ENCODE measurements at regions of chr1 and their contacts with region 1.

Region 1: DNA sequence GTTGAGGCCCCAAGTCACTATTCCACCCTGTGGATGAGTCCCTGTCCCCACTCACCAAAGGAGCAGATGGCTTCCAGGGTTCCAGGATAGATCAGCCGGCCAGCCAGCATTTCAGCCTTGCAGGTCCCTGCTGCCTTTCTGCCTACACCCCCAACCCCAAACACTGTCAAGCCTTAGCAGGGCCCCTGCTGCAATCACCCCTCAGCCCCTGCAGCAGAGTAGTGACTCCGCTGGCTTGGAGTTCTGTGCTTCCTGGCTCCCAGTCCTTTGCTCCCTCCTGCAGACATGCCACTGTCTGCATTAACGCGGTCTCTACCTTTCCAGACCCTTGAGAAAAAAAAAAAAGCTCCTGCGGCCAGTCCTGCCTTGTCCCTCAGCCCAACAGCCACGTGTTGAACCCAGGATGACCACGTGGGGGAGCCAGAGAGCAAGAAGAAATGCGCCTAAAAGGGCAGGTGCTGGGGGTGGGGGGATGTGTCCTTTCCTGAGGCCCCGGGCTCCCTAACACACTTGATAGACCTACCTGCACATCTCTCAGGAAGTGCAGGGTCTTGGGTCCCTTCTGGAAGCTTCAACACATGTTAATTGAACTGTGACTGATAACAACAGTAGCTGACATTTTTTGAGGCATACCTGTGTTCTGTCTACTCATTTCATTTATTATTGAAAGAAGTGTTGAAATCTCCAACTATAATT is 37.4 kb downstream of the RASSF5 start:
- DNase-seq: peak; percentile 84
- ATAC-seq: peak; percentile 95
- H3K4me3 ChIP-seq: no peak overlapping the region
- H3K4me3 Mint-ChIP-seq: no peak overlapping the region
- H3K27ac ChIP-seq: no peak overlapping the region
- H3K27ac Mint-ChIP-seq: no peak overlapping the region
- H3K4me1 ChIP-seq: peaks cover 0 to 6% of the 10 kb centered on the region in 2 donors
- H3K4me1 Mint-ChIP-seq: peaks cover 7% of the 10 kb centered on the region
- H3K27me3 ChIP-seq: no peaks in the 10 kb centered on the region
- H3K27me3 Mint-ChIP-seq: no peaks in the 10 kb centered on the region
- CTCF ChIP-seq: peak; percentile 92

Region 2: DNA sequence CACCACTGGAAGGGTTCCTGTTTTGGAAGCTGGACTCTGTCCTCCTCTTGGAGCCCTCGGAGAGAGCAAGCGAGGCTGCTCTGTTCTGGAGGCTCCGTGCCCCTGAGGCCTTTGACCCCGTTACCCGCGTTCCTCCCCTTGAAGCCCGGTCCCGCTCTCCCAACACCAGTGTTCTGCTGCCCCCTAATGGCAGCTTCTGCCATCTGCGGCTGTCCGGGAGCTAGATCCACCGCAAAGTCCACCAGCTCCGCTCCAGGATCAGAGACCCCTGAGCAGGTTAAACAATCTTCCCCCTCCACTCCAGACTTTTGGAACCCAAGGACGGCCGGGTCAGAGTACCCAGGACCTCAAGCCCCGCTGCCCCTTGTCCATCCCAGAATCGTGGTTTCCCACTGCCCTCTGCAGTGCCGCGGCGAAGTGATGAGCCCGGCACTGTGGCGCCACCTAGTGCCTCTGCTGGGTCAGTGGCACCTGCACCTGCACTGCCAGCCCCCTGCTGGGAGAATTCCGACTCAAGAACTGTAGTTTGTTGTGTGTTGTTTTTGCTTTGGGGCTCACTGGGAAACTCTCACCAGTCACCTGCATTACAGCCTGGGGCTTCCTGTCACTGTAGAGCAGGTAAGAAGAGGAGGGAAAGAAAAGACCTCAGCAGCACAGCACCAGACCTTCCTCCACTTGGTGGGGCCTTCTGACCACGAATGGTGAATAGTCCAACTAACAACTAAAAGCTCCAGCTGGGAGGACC is 1737.6 kb before region 1 on chr1:
- CTCF ChIA-PET with region 1: no interaction called
- POLR2A ChIA-PET with region 1: no interaction called
- intact Hi-C with region 1: no loop called
- DNase-seq: peak; percentile 94
- ATAC-seq: peak; percentile 95
- H3K4me3 ChIP-seq: peak overlapping the region in 4 of 5 experiments; percentile 29 to 73 (median 56)
- H3K4me3 Mint-ChIP-seq: peak overlapping the region; percentile 87
- H3K27ac ChIP-seq: no peak overlapping the region
- H3K27ac Mint-ChIP-seq: peak overlapping the region; percentile 70
- H3K4me1 ChIP-seq: peaks cover 15 to 22% of the 10 kb centered on the region in 2 donors
- H3K4me1 Mint-ChIP-seq: peaks cover 18% of the 10 kb centered on the region
- H3K27me3 ChIP-seq: no peaks in the 10 kb centered on the region
- H3K27me3 Mint-ChIP-seq: peaks cover 3% of the 10 kb centered on the region
- CTCF ChIP-seq: peak; percentile 100

Region 3: GRCh38 chr1:206489980-206490770 is 54.5 kb before region 1 on chr1:
- CTCF ChIA-PET with region 1: interaction called, 32 read pairs
- POLR2A ChIA-PET with region 1: no interaction called
- intact Hi-C with region 1: loop called (anchors 2 kb)
- DNase-seq: peak; percentile 73
- ATAC-seq: peak; percentile 80
- H3K4me3 ChIP-seq: no peak overlapping the region
- H3K4me3 Mint-ChIP-seq: no peak overlapping the region
- H3K27ac ChIP-seq: no peak overlapping the region
- H3K27ac Mint-ChIP-seq: no peak overlapping the region
- H3K4me1 ChIP-seq: peaks cover 4 to 5% of the 10 kb centered on the region in 2 donors
- H3K4me1 Mint-ChIP-seq: peaks cover 7% of the 10 kb centered on the region
- H3K27me3 ChIP-seq: no peaks in the 10 kb centered on the region
- H3K27me3 Mint-ChIP-seq: no peaks in the 10 kb centered on the region
- CTCF ChIP-seq: peak; percentile 83

Region 4: GRCh38 chr1:206517784-206518183 is 26.9 kb before region 1 on chr1:
- CTCF ChIA-PET with region 1: interaction called, 13 read pairs
- POLR2A ChIA-PET with region 1: no interaction called
- intact Hi-C with region 1: no loop called
- DNase-seq: no peak
- ATAC-seq: no peak
- H3K4me3 ChIP-seq: no peak overlapping the region
- H3K4me3 Mint-ChIP-seq: no peak overlapping the region
- H3K27ac ChIP-seq: no peak overlapping the region
- H3K27ac Mint-ChIP-seq: no peak overlapping the region
- H3K4me1 ChIP-seq: peaks cover 10 to 12% of the 10 kb centered on the region in 2 donors
- H3K4me1 Mint-ChIP-seq: peaks cover 6% of the 10 kb centered on the region
- H3K27me3 ChIP-seq: peaks cover 0 to 7% (median 2%) of the 10 kb centered on the region in 4 experiments
- H3K27me3 Mint-ChIP-seq: no peaks in the 10 kb centered on the region
- CTCF ChIP-seq: no peak

Region 5: GRCh38 chr1:206575165-206575893 is 30.6 kb after region 1 on chr1:
- CTCF ChIA-PET with region 1: interaction called, 1,018 read pairs
- POLR2A ChIA-PET with region 1: interaction called, 12 read pairs
- intact Hi-C with region 1: no loop called
- DNase-seq: peak; percentile 84
- ATAC-seq: peak; percentile 38
- H3K4me3 ChIP-seq: peak overlapping the region; percentile 2 to 49 (median 26)
- H3K4me3 Mint-ChIP-seq: peak overlapping the region; percentile 86
- H3K27ac ChIP-seq: peak overlapping the region; percentile 86 to 96
- H3K27ac Mint-ChIP-seq: peak overlapping the region; percentile 98
- H3K4me1 ChIP-seq: peaks cover 80 to 89% of the 10 kb centered on the region in 2 donors
- H3K4me1 Mint-ChIP-seq: peaks cover 92% of the 10 kb centered on the region
- H3K27me3 ChIP-seq: no peaks in the 10 kb centered on the region
- H3K27me3 Mint-ChIP-seq: no peaks in the 10 kb centered on the region
- CTCF ChIP-seq: no peak

Region 6: DNA sequence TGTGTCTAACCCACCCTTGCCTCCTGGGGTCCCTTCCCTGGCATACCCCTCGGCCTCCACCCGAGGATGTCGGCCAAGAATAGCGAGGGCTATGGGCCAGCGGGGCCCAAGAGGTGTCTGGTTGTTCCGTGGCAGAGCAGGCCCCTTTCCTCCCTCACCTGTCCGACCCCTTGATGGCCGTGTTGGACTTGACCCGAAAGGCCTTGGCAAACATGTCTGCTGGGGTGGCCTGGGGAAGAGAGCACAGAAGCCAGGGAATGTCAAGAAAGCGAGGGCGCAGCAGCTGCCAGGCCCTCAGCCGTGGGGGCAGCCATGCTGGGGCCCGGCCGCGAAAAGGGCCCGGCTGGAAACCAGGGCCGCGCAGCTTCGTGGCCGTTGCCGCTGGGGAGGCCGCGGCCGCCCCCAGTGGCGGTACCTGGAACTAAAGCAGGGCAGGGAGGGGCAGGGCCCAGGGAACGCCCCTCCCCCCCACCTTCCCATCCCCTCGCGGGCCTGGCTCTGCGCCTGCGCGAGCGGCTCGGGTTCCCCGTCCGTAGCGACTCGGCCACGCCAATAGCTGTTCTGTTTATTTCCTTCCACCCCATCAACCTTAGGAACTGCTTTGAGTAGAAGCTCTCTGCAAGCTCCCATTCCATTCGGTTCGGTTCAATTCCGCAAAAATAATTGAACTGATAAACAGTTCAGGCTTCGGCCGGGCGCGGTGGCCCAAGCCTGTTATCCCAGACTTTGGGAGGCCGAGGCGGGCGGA is 67.6 kb after region 1 on chr1 and contains the start of gene EIF2D:
- CTCF ChIA-PET with region 1: interaction called, 29 read pairs
- POLR2A ChIA-PET with region 1: no interaction called
- intact Hi-C with region 1: no loop called
- DNase-seq: peak; percentile 96
- ATAC-seq: peak; percentile 100
- H3K4me3 ChIP-seq: peak within 1 kb of the TSS; percentile 61 to 87 (median 86)
- H3K4me3 Mint-ChIP-seq: peak within 1 kb of the TSS; percentile 93
- H3K27ac ChIP-seq: peak within 1 kb of the TSS; percentile 70 to 93
- H3K27ac Mint-ChIP-seq: peak within 1 kb of the TSS; percentile 96
- H3K4me1 ChIP-seq: peaks cover 8 to 12% of the 10 kb centered on the region in 2 donors
- H3K4me1 Mint-ChIP-seq: peaks cover 19% of the 10 kb centered on the region
- H3K27me3 ChIP-seq: no peaks in the 10 kb centered on the region
- H3K27me3 Mint-ChIP-seq: no peaks in the 10 kb centered on the region
- CTCF ChIP-seq: peak; percentile 88
- total RNA-seq, gene EIF2D: 60.6 and 62.2 TPM in 2 replicates